H1 (cell line): ENCODE measurements at regions of chrX and their contacts with region 1.

Region 1: DNA sequence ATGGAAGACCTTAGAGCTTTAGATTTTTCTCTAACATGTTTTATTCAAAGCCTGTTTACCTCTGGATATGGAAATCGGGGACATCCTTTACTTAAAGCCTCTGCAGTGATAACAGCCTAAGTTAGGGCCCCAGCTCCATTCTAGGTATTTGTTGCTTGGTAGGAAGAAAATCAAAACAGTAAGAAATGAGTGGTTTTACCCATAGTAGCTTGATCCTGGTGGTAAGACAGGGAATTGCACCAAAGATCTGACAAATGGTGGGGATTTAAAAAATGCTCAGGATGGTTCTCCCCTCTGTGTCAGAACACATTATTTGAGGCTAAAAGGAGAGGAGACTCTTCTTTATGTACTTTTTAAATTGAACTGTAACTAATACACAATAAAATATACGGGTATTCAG is 52.4 kb downstream of the AFF2 start:
- DNase-seq: no peak
- H3K4me3 ChIP-seq: no peak overlapping the region
- H3K27ac ChIP-seq: no peak overlapping the region
- H3K4me1 ChIP-seq: no peaks in the 10 kb centered on the region
- H3K27me3 ChIP-seq: no peaks in the 10 kb centered on the region
- CTCF ChIP-seq: peak in 1 of 3 experiments; percentile 28; a peak in 1 of 4 replicates
- EP300 ChIP-seq: no peak
- POLR2A ChIP-seq: no peak
- RAD21 ChIP-seq: 0 out of 4 replicates have a peak, but pooled peaks of 1 of the 2 experiments have one; percentile 16

Region 2: DNA sequence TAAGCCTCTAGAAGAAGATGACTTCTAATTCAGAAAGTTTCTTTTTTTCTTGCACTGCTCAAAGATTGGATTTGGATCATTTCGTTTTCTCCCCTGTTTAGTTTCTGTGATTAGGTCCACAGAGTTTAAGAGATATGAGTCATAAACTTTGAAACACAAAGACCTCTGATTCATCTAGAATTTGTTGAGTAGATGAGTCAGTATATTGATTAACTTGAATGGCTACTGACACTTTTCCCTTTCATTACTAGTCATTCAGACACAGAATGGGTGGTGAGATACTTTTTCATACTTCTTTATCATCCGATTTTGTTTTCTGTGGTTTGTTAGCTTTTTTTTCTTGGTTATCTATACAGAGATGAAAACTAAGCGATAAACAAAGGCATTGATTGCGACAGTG is 86.5 kb before region 1 on chrX:
- CTCF ChIA-PET with region 1: no interaction called
- POLR2A ChIA-PET with region 1: no interaction called
- DNase-seq: no peak
- H3K4me3 ChIP-seq: no peak overlapping the region
- H3K27ac ChIP-seq: no peak overlapping the region
- H3K4me1 ChIP-seq: no peaks in the 10 kb centered on the region
- H3K27me3 ChIP-seq: no peaks in the 10 kb centered on the region
- CTCF ChIP-seq: no peak
- EP300 ChIP-seq: no peak
- POLR2A ChIP-seq: no peak
- RAD21 ChIP-seq: no peak

Region 3: GRCh38 chrX:148535639-148536038 is 17.1 kb before region 1 on chrX:
- CTCF ChIA-PET with region 1: interaction called, 15 read pairs
- POLR2A ChIA-PET with region 1: no interaction called
- DNase-seq: no peak
- H3K4me3 ChIP-seq: no peak overlapping the region
- H3K27ac ChIP-seq: no peak overlapping the region
- H3K4me1 ChIP-seq: no peaks in the 10 kb centered on the region; a peak in 1 of 7 replicates
- H3K27me3 ChIP-seq: no peaks in the 10 kb centered on the region; a peak in 1 of 7 replicates
- CTCF ChIP-seq: no peak
- EP300 ChIP-seq: no peak
- POLR2A ChIP-seq: no peak
- RAD21 ChIP-seq: no peak

Region 4: DNA sequence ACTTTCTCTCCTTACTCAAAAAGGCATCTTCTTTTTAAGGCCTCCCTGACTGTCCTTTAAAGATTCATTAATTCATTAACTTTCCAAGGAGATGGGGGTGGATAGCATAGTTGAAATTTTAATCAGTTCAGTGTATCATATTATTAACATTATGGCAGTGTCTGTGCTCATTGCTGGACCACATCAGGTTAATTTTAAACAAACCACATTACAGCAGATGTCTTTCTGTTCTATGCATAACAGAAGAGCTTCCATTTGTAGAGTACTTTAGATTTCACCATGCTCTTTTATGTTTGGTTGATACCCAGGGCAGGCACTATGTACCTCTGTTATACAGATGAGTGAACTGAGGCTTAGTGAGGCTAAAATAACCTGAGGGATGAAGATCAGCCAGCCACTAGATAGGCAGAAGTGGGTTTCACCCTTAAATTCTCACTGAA is 11.2 kb before region 1 on chrX:
- CTCF ChIA-PET with region 1: interaction called, 15 read pairs
- POLR2A ChIA-PET with region 1: no interaction called
- DNase-seq: no peak
- H3K4me3 ChIP-seq: no peak overlapping the region
- H3K27ac ChIP-seq: no peak overlapping the region
- H3K4me1 ChIP-seq: peaks cover 0 to 7% (median 2%) of the 10 kb centered on the region in 4 experiments; a peak in 3 of 7 replicates
- H3K27me3 ChIP-seq: no peaks in the 10 kb centered on the region; a peak in 1 of 7 replicates
- CTCF ChIP-seq: no peak
- EP300 ChIP-seq: no peak
- POLR2A ChIP-seq: no peak
- RAD21 ChIP-seq: no peak

Region 5: DNA sequence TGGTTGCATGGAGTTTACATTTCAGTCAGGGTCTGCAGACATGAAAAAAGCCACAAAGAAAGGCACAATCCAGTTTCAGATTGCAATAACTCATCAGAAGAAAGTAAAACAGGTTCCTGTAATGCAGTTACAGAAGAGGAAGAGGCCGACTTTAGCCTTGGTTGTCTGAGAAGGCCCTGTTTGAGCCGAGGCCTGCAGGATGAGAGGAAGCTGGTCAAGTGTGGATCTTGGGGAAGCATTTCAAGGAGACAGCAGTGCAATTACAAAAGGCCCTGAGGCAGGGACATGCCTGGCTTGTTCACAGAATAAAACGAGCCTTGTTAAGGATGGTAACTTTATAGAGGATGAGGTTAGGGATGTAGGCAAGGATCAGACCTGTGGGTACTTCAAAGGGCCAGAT is 10.1 kb after region 1 on chrX:
- CTCF ChIA-PET with region 1: interaction called, 11 read pairs
- POLR2A ChIA-PET with region 1: no interaction called
- DNase-seq: no peak
- H3K4me3 ChIP-seq: no peak overlapping the region
- H3K27ac ChIP-seq: no peak overlapping the region
- H3K4me1 ChIP-seq: peaks cover 0 to 6% (median 2%) of the 10 kb centered on the region in 4 experiments; a peak in 3 of 7 replicates
- H3K27me3 ChIP-seq: no peaks in the 10 kb centered on the region
- CTCF ChIP-seq: no peak
- EP300 ChIP-seq: no peak
- POLR2A ChIP-seq: no peak
- RAD21 ChIP-seq: no peak